HepG2 (cell line): ENCODE measurements at regions of chr3 and their contacts with region 1.

Region 1: GRCh38 chr3:45593708-45594609 is 592 bp upstream of the LIMD1 start:
- DNase-seq: peak; percentile 67
- ATAC-seq: peak; percentile 84
- H3K4me3 ChIP-seq: peak overlapping the region; percentile 63 to 90 (median 85)
- H3K27ac ChIP-seq: peak overlapping the region; percentile 70
- H3K4me1 ChIP-seq: peaks cover 67% of the 10 kb centered on the region
- H3K27me3 ChIP-seq: 0 out of 5 replicates have a peak, but pooled peaks cover 0 to 2% of the 10 kb centered on the region in 2 experiments
- CTCF ChIP-seq: no peak
- EP300 ChIP-seq: no peak
- POLR2A ChIP-seq: 0 out of 4 replicates have a peak, but pooled peaks of 1 of the 2 experiments have one; percentile 15
- RAD21 ChIP-seq: no peak

Region 2: DNA sequence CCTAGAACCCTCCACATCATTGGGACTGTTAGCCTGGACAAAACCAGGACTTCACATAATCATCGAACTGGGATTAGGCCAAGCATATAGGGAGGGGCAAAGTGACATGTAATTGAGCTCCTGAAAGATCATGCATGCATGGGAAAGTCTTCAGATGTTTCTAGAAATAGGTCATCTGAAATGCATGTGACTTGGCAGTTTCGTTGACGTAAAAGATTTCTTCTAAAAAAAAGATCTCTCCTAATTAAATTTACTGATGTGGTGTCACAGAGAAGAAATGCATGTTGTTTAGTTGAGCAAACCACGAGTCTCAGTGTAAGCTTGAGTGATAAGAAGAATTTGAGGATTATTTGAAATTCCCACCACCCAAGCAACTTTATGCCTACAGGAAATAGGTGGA is 69.4 kb before region 1 on chr3:
- CTCF ChIA-PET with region 1: no interaction called
- POLR2A ChIA-PET with region 1: no interaction called
- in situ Hi-C with region 1: loop called (anchors 5 kb)
- intact Hi-C with region 1: no loop called
- DNase-seq: no peak
- ATAC-seq: no peak
- H3K4me3 ChIP-seq: no peak overlapping the region
- H3K27ac ChIP-seq: no peak overlapping the region
- H3K4me1 ChIP-seq: no peaks in the 10 kb centered on the region
- H3K27me3 ChIP-seq: no peaks in the 10 kb centered on the region
- CTCF ChIP-seq: no peak
- EP300 ChIP-seq: no peak
- POLR2A ChIP-seq: no peak
- RAD21 ChIP-seq: no peak

Region 3: GRCh38 chr3:45640724-45641361 is 46.9 kb after region 1 on chr3:
- CTCF ChIA-PET with region 1: no interaction called
- POLR2A ChIA-PET with region 1: interaction called, 4 read pairs
- in situ Hi-C with region 1: no loop called
- intact Hi-C with region 1: loop called (anchors 1 kb)
- DNase-seq: no peak
- ATAC-seq: no peak
- H3K4me3 ChIP-seq: no peak overlapping the region
- H3K27ac ChIP-seq: peak overlapping the region; percentile 34
- H3K4me1 ChIP-seq: peaks cover 93% of the 10 kb centered on the region
- H3K27me3 ChIP-seq: no peaks in the 10 kb centered on the region
- CTCF ChIP-seq: no peak
- EP300 ChIP-seq: no peak
- POLR2A ChIP-seq: no peak
- RAD21 ChIP-seq: no peak